Kidney (tissue), 22 donors: ENCODE measurements at regions of chr3 and their contacts with region 1.

Region 1: DNA sequence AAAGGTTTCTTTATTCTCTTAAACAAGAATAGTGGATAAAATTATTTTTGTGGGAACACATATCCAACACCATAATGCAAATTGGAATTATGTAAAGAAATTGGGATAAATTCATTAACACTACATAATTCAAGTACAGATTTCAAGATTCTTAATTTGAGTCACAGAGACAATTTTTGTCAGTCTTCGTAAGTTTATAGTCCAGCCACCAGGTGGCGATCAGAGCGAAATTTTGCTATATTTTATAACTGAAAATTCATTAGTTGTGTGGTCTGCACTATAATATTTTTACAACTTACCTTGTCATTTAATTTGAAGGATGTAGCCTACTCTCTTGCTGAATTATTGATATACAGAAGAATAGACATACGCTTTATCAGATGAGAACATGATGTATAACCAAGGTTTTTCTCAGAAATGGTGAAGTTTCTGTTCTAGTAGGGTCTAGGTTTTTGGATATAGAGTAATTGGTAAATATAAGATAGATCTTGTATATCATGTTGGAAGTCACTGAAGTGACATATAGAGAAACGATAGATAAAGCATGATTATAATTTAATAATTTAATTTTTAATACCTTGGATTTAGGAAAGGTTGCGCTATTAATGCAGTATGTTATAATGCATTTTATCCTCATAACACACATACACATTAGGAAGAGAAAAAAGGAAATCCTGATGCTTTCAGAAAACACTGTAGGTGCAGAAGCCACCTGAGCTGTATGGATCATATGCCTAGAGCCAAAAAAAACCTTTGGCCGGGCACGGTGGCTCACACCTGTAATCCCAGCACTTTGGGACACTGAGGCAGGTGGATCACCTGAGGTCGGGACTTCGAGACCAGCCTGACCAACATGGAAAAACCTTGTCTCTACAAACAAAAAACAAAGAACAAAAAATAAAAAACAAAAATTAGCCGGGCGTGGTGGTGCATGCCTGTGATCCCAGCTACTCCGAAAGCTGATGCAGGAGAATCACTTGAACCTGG is 31.7 kb downstream of the PLSCR4 start:
- DNase-seq: peak in 2 of 5 donors; percentile 27 to 34
- H3K4me3 ChIP-seq: no peak overlapping the region
- H3K27ac ChIP-seq: no peak overlapping the region
- H3K4me1 ChIP-seq: peaks cover 0 to 14% (median 4%) of the 10 kb centered on the region in 3 donors
- H3K27me3 ChIP-seq: no peaks in the 10 kb centered on the region
- CTCF ChIP-seq: peak; percentile 70

Region 2: GRCh38 chr3:146326670-146327543 is 107.7 kb after region 1 on chr3:
- intact Hi-C with region 1: loop called (anchors 5 kb)
- DNase-seq: peak in 2 of 5 donors; percentile 49 to 79
- H3K4me3 ChIP-seq: no peak overlapping the region
- H3K27ac ChIP-seq: no peak overlapping the region
- H3K4me1 ChIP-seq: no peaks in the 10 kb centered on the region
- H3K27me3 ChIP-seq: no peaks in the 10 kb centered on the region
- CTCF ChIP-seq: peak; percentile 52